ENCODE measurements at regions of chr13 and their contacts with region 1.

Region 1: DNA sequence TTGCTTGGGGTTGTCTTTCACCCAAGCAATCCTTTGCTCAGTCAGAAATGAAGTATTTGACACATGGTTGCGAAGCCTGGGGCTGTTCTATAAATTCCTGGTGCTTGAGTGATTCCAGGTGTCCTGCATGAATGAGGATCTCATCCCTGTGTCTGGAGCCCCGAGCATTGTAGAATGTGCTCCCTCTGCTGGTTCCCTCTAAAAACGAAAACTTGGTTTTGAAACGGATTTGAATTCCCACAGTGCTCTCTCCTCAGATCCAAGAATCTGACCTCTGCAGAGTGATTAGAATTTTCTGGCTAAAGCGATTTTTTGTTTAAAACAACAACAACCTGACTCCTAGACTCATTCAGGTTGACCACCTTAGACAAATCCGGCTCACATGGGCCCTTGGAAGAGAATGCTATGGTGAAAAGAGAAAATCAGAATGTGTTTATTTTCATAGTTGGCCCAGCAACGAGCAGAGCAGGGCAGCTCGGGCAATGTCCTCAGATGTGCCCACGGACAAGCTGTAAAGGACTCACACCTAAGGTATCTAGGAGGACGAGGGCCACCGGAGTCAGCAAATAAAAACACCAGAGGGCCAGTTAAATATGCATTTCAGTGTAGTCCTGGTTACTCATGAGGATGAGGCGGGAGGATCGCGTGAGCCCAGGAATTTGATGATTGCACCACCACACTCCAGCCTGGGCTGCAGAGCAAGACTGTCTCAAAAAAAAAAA is 8.7 kb upstream of the ATP12A start:
- DNase-seq: peak; percentile 69 to 78
- H3K4me3 ChIP-seq: no peak overlapping the region
- H3K4me3 Mint-ChIP-seq: peak overlapping the region; percentile 53
- H3K27ac Mint-ChIP-seq: peak overlapping the region; percentile 63
- H3K4me1 ChIP-seq: peaks cover 17% of the 10 kb centered on the region
- H3K4me1 Mint-ChIP-seq: peaks cover 17% of the 10 kb centered on the region
- H3K27me3 ChIP-seq: no peaks in the 10 kb centered on the region; the same call in 1 of the 2 replicates
- H3K27me3 Mint-ChIP-seq: no peaks in the 10 kb centered on the region
- CTCF ChIP-seq: peak; percentile 49 to 89

Region 2: GRCh38 chr13:24539500-24540165 is 131.9 kb before region 1 on chr13:
- CTCF ChIA-PET with region 1: no interaction called
- POLR2A ChIA-PET with region 1: no interaction called
- intact Hi-C with region 1: no loop called
- DNase-seq: no peak
- H3K4me3 ChIP-seq: no peak overlapping the region
- H3K4me3 Mint-ChIP-seq: no peak overlapping the region
- H3K27ac Mint-ChIP-seq: no peak overlapping the region
- H3K4me1 ChIP-seq: no peaks in the 10 kb centered on the region
- H3K4me1 Mint-ChIP-seq: peaks cover 7% of the 10 kb centered on the region
- H3K27me3 ChIP-seq: no peaks in the 10 kb centered on the region
- H3K27me3 Mint-ChIP-seq: peaks cover 25% of the 10 kb centered on the region
- CTCF ChIP-seq: no peak

Region 3: GRCh38 chr13:24574847-24575246 is 96.7 kb before region 1 on chr13:
- CTCF ChIA-PET with region 1: no interaction called
- POLR2A ChIA-PET with region 1: no interaction called
- intact Hi-C with region 1: loop called (anchors 1 kb)
- DNase-seq: no peak
- H3K4me3 ChIP-seq: no peak overlapping the region
- H3K4me3 Mint-ChIP-seq: no peak overlapping the region
- H3K27ac Mint-ChIP-seq: no peak overlapping the region
- H3K4me1 ChIP-seq: no peaks in the 10 kb centered on the region
- H3K4me1 Mint-ChIP-seq: no peaks in the 10 kb centered on the region
- H3K27me3 ChIP-seq: no peaks in the 10 kb centered on the region
- H3K27me3 Mint-ChIP-seq: peaks cover 2% of the 10 kb centered on the region
- CTCF ChIP-seq: no peak

Region 4: DNA sequence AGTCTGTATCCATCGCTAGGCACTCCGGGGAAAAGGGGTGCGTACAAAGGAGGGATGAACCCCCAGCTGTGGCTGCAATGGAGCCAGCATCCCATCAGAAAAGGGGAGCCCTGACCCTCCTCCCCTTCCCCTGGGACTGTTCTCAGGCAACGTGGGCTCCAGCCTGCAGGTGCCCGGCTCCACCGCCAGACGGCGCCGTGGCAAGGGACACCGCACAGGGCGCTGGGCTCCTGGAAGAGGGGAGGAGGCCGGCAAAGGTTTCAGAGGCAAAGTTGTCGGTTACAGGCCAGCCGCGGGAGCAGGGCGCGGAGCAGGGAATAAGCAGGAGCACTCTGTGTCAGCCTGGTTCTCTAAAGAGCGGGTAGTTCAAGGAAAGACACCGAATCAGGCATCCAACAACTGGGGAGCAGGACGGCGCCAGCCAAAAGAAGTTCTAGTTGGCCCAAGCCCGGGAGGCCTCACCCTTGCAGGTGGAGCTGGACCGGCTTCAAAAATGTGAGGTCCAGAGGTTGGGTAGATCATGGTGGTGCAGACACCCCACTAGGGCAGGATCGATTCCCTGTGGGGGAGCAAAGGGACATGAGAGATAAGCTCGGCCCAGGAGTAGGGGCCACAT is 44.3 kb before region 1 on chr13:
- CTCF ChIA-PET with region 1: no interaction called
- POLR2A ChIA-PET with region 1: no interaction called
- intact Hi-C with region 1: loop called (anchors 5 kb)
- DNase-seq: peak in 1 of 2 experiments; percentile 28
- H3K4me3 ChIP-seq: no peak overlapping the region
- H3K4me3 Mint-ChIP-seq: no peak overlapping the region
- H3K27ac Mint-ChIP-seq: no peak overlapping the region
- H3K4me1 ChIP-seq: no peaks in the 10 kb centered on the region
- H3K4me1 Mint-ChIP-seq: peaks cover 19% of the 10 kb centered on the region
- H3K27me3 ChIP-seq: no peaks in the 10 kb centered on the region
- H3K27me3 Mint-ChIP-seq: no peaks in the 10 kb centered on the region
- CTCF ChIP-seq: peak in 1 of 2 experiments; percentile 36

Region 5: GRCh38 chr13:24734950-24735349 is 63.4 kb after region 1 on chr13:
- CTCF ChIA-PET with region 1: no interaction called
- POLR2A ChIA-PET with region 1: no interaction called
- intact Hi-C with region 1: no loop called
- DNase-seq: no peak
- H3K4me3 ChIP-seq: no peak overlapping the region
- H3K4me3 Mint-ChIP-seq: no peak overlapping the region
- H3K27ac Mint-ChIP-seq: no peak overlapping the region
- H3K4me1 ChIP-seq: no peaks in the 10 kb centered on the region
- H3K4me1 Mint-ChIP-seq: no peaks in the 10 kb centered on the region
- H3K27me3 ChIP-seq: no peaks in the 10 kb centered on the region
- H3K27me3 Mint-ChIP-seq: no peaks in the 10 kb centered on the region
- CTCF ChIP-seq: no peak

Region 6: GRCh38 chr13:24900507-24900906 is 229.0 kb after region 1 on chr13:
- CTCF ChIA-PET with region 1: no interaction called
- POLR2A ChIA-PET with region 1: no interaction called
- intact Hi-C with region 1: no loop called
- DNase-seq: no peak
- H3K4me3 ChIP-seq: no peak overlapping the region
- H3K4me3 Mint-ChIP-seq: no peak overlapping the region
- H3K27ac Mint-ChIP-seq: no peak overlapping the region
- H3K4me1 ChIP-seq: no peaks in the 10 kb centered on the region
- H3K4me1 Mint-ChIP-seq: no peaks in the 10 kb centered on the region
- H3K27me3 ChIP-seq: no peaks in the 10 kb centered on the region
- H3K27me3 Mint-ChIP-seq: no peaks in the 10 kb centered on the region
- CTCF ChIP-seq: no peak